ENCODE measurements at regions of chr5 and their contacts with region 1.

Region 1: DNA sequence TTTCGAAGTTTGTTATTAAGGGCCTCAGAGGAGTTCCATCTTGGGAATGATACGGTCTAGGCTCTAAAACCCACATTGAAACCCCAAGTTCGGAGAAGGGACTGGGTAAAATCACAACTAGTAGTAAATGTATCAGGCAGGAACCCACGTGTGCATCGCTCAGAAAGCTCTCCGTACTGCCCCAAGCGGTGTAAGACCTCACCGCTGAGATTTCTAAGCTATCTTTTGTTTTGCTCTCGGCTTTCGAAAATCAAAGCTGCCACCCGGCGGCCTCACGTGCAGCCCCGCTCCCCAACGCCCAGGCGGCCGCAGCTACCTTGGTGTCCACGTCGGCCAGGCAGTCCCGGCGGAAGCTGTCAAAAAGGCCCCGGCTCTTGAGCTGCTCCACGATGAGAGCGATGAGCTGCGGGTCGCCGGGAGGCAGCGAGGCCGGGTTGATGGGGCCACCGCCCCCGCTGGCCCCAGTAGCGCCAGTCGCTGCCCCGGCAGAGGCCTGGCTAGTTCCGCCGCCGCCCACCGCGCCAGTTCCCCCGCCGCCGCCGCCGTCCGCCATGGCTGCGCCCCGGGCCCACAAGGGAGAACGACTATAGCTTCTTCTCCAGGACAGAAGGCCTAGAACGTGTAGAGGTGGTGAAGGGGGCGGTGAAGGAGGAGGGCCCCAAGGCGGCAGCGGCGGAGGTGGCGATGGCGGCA is 420 bp downstream of the BOD1 start:
- DNase-seq: peak; percentile 74
- ATAC-seq: peak; percentile 49
- H3K4me3 Mint-ChIP-seq: peak overlapping the region; percentile 89
- H3K27ac Mint-ChIP-seq: peak overlapping the region; percentile 90
- H3K4me1 Mint-ChIP-seq: peaks cover 29% of the 10 kb centered on the region
- H3K27me3 Mint-ChIP-seq: no peaks in the 10 kb centered on the region

Region 2: GRCh38 chr5:173917788-173918786 is 302.1 kb after region 1 on chr5:
- POLR2A ChIA-PET with region 1: interaction called, 11 read pairs
- DNase-seq: peak; percentile 48
- ATAC-seq: peak; percentile 95
- H3K4me3 Mint-ChIP-seq: no peak overlapping the region
- H3K27ac Mint-ChIP-seq: no peak overlapping the region
- H3K4me1 Mint-ChIP-seq: peaks cover 7% of the 10 kb centered on the region
- H3K27me3 Mint-ChIP-seq: no peaks in the 10 kb centered on the region

Measured in activated naive CD8-positive, alpha-beta T cell treated with anti-CD3 and anti-CD28 coated beads, Interleukin-2, amount 10 ng/mL, durations not matched to agents 7 days and 5 days (primary cell).